ENCODE measurements at regions of chr18 and their contacts with region 1.

Region 1: DNA sequence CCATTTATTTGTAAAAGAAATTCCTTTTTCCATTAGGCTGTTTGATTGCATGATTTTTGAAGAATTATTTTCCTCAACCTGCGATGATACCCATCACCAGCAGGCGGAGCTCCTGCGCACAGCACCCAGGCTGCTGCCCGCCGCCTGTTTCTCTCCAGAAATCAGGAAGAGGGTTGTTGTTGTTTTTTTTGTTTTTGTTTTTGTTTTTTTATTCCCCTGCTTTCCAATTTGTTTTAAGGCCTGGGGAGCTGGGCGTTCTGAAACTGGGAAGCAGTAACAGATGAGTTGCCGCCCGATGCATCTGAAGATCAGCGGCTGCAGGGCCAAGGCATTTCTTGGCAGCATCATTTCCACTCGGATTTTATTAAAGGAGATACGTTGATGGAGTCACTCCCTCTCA is 132.1 kb downstream of the MBP start:
- DNase-seq: peak; percentile 60
- H3K4me3 Mint-ChIP-seq: no peak overlapping the region
- H3K27ac Mint-ChIP-seq: no peak overlapping the region
- H3K4me1 Mint-ChIP-seq: peaks cover 20% of the 10 kb centered on the region
- H3K27me3 Mint-ChIP-seq: no peaks in the 10 kb centered on the region

Region 2: DNA sequence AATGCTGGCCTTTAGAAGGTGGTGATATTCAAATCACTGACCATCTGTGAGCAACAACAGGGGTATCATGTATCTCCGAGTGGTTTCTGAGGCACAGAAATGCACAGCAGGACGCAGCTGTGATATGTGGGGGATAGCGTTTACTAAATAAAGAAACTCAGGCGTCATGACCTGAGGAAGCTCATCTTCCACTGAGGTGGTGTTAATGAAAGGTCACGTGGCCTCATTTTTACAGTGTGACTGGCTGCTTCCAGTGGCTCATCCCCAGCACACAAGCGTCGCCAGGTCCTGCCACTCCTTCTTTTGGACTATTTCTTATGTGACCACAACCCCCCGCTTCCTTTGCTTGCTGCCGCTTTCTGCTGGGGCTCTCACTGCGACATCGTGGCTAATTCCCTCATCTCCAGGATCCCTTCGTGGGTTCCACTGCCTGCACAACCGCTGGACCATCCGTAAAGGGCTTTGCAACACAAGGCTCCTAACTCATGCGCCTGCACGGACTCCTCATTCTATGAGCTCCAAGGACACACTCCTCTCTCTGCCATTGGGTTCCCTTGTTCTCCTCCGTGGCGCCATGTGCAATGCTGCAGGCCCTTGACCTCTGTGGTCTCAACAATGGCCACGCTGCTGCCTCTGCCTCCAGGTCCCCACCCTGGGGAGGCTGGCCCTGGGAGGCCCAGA is 22.7 kb after region 1 on chr18:
- CTCF ChIA-PET with region 1: no interaction called
- intact Hi-C with region 1: no loop called
- DNase-seq: no peak
- H3K4me3 Mint-ChIP-seq: no peak overlapping the region
- H3K27ac Mint-ChIP-seq: no peak overlapping the region
- H3K4me1 Mint-ChIP-seq: peaks cover 3% of the 10 kb centered on the region
- H3K27me3 Mint-ChIP-seq: no peaks in the 10 kb centered on the region

Region 3: GRCh38 chr18:77054606-77055428 is 54.3 kb after region 1 on chr18:
- CTCF ChIA-PET with region 1: interaction called, 71 read pairs
- intact Hi-C with region 1: loop called (anchors 1 kb)
- DNase-seq: peak; percentile 93
- H3K4me3 Mint-ChIP-seq: peak overlapping the region; percentile 78
- H3K27ac Mint-ChIP-seq: peak overlapping the region; percentile 93
- H3K4me1 Mint-ChIP-seq: peaks cover 49% of the 10 kb centered on the region
- H3K27me3 Mint-ChIP-seq: no peaks in the 10 kb centered on the region

Region 4: DNA sequence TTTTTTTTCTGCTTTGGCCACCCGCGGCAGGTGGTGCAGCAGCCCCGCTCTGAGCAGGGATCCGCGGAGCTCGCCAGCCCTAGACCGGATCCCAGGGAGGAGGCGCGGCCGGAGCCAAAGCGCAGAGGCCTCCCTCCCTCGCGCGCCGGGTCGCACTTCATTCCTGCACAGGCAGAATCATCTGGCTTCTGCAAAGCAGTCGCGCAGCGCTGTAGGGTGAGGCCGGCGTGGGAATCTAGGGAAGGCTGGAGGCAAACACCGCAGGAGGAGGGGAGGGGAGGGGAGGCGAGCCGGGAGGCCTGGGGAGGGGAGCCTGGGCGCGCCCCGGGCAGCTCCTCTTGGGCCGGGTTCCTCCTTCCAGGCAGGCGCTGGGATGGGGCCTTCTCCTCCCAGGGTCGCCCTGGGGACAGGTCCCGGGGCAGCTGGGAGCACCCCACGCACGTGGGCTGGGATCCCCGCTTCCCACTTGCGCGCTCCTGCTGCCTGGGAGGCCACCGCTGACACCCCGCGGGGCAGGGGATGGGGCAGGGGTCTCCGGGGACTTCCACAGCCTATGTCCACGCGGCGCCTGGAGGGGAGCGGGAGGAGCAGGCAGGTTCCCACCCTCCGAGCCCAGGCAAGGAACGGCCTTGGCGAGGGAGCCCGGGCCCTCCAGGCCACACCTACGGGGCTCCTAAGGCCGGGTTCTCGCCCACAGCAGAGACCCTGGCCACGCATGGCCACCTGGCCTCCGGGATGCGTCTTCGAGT is 87.0 kb after region 1 on chr18:
- CTCF ChIA-PET with region 1: no interaction called
- intact Hi-C with region 1: no loop called
- DNase-seq: no peak
- H3K4me3 Mint-ChIP-seq: no peak overlapping the region
- H3K27ac Mint-ChIP-seq: no peak overlapping the region
- H3K4me1 Mint-ChIP-seq: peaks cover 58% of the 10 kb centered on the region
- H3K27me3 Mint-ChIP-seq: no peaks in the 10 kb centered on the region

Region 5: DNA sequence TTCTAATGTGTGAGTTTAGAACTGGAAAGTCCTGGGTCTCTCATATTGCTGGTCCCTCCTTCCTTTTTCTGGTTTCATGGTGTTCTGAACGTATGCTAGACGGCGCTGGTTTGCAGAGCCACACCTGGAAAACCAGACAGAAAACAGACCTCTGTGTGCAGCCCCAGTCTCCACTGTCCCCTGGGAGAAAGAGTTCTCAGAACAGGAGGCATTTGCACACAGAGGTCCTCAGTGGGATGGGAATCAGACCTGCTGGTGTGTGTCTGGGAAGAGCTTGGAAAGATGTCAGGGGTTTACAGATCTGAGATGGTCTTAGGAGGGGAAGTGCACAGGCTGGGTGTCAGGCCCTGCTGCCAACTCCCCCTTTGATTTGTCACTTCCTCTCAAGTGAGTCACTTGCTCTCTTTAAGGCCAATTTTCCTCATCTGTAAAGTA is 146.9 kb after region 1 on chr18:
- CTCF ChIA-PET with region 1: interaction called, 5 read pairs
- intact Hi-C with region 1: loop called (anchors 5 kb)
- DNase-seq: peak; percentile 52
- H3K4me3 Mint-ChIP-seq: peak overlapping the region; percentile 2
- H3K27ac Mint-ChIP-seq: peak overlapping the region; percentile 84
- H3K4me1 Mint-ChIP-seq: peaks cover 40% of the 10 kb centered on the region
- H3K27me3 Mint-ChIP-seq: no peaks in the 10 kb centered on the region

Region 6: DNA sequence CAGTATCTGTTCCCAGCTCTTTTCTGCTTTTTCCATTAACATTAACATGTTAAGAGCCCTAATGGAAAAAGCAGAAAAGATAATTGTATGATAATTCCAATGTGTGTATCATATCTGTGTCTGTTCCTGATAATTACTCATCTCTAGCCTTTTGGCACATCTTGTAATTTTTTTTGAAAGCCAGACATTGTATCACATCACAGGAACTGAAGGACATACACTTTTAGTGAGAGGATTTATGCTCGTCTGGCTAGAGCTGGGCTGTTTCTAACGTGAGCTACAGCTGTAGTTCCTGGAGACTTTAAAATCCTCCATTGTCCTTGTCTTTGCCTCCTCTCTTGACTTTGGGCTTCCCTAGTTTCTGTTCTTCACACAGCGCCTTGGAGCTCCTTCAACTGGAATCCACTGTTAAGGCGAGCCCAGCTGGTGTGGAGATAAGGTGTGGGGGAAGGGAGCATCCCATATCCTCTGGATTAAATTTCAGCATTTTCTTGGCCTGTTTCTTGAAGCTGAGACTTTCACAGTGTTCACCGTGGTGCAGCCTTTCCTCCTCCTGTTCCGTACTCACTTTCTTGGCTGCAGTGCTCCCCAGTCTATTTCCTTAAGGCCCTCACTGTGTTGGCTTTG is 460.6 kb after region 1 on chr18:
- CTCF ChIA-PET with region 1: no interaction called
- intact Hi-C with region 1: loop called (anchors 10 kb)
- DNase-seq: no peak
- H3K4me3 Mint-ChIP-seq: no peak overlapping the region
- H3K27ac Mint-ChIP-seq: no peak overlapping the region
- H3K4me1 Mint-ChIP-seq: no peaks in the 10 kb centered on the region
- H3K27me3 Mint-ChIP-seq: peaks cover 3% of the 10 kb centered on the region

Measured in activated naive CD4-positive, alpha-beta T cell treated with anti-CD3 and anti-CD28 coated beads for 36 hours (primary cell).